B cell (primary cell): ENCODE measurements at regions of chr4 and their contacts with region 1.

Region 1: GRCh38 chr4:185597532-185598188 is 62.4 kb upstream of the PDLIM3 start:
- DNase-seq: peak; percentile 79
- ATAC-seq: peak; percentile 76
- H3K4me3 ChIP-seq: no peak overlapping the region
- H3K4me3 Mint-ChIP-seq: no peak overlapping the region
- H3K27ac ChIP-seq: no peak overlapping the region
- H3K27ac Mint-ChIP-seq: no peak overlapping the region
- H3K4me1 ChIP-seq: no peaks in the 10 kb centered on the region
- H3K4me1 Mint-ChIP-seq: peaks cover 7% of the 10 kb centered on the region
- H3K27me3 ChIP-seq: peaks cover 0 to 3% (median 0%) of the 10 kb centered on the region in 4 experiments
- H3K27me3 Mint-ChIP-seq: peaks cover 33% of the 10 kb centered on the region
- CTCF ChIP-seq: peak; percentile 99

Region 2: DNA sequence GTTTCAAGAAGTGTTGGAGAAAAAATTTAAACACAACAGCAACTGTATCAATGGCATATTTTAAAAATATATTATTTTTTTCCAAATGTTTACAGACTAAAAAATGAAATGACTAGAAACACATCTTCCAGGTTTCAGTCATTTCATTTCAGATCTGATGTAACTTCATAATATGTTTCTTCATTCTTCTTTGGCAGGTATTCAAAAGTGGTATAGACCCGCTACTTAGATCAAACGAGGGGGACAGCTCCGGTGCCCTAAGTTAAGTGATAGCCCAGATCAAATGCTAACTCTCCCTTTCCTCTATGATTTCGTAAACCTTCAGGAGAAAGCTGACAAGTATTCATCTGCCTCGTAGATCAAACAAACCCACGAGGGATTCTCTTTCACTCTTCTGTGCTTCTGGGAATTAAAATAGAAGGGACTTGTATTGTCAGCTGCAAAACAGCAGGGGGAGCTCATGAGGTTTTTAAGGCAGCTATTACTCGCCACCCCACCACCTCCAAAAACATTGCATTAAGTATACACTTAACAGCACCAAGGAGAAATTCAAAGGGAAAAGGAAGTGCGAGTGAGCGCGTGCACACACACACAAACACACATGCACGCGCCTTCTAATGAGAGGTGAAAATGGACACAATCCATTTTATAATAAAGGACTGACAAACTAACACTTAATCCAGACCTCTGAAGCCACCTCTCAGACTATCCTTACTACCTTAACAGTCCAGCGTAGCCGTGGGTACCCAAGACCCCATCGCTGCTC is 558.0 kb before region 1 on chr4:
- CTCF ChIA-PET with region 1: interaction called, 20 read pairs
- POLR2A ChIA-PET with region 1: no interaction called
- intact Hi-C with region 1: loop called (anchors 1 kb)
- DNase-seq: peak; percentile 73
- ATAC-seq: peak; percentile 86
- H3K4me3 ChIP-seq: no peak overlapping the region
- H3K4me3 Mint-ChIP-seq: peak overlapping the region; percentile 16
- H3K27ac ChIP-seq: no peak overlapping the region
- H3K27ac Mint-ChIP-seq: no peak overlapping the region
- H3K4me1 ChIP-seq: peaks cover 0 to 5% of the 10 kb centered on the region in 2 donors
- H3K4me1 Mint-ChIP-seq: peaks cover 5% of the 10 kb centered on the region
- H3K27me3 ChIP-seq: peaks cover 0 to 3% (median 0%) of the 10 kb centered on the region in 4 experiments
- H3K27me3 Mint-ChIP-seq: peaks cover 28% of the 10 kb centered on the region
- CTCF ChIP-seq: peak; percentile 87

Region 3: GRCh38 chr4:185425647-185426352 is 171.9 kb before region 1 on chr4 and contains the start of gene UFSP2:
- CTCF ChIA-PET with region 1: interaction called, 31 read pairs
- POLR2A ChIA-PET with region 1: no interaction called
- intact Hi-C with region 1: loop called (anchors 1 kb)
- DNase-seq: peak; percentile 98
- ATAC-seq: peak; percentile 88
- H3K4me3 ChIP-seq: peak within 1 kb of the TSS; percentile 78 to 99 (median 88)
- H3K4me3 Mint-ChIP-seq: peak within 1 kb of the TSS; percentile 86
- H3K27ac ChIP-seq: peak within 1 kb of the TSS; percentile 98 to 100
- H3K27ac Mint-ChIP-seq: peak within 1 kb of the TSS; percentile 99
- H3K4me1 ChIP-seq: peaks cover 13% of the 10 kb centered on the region in 2 donors
- H3K4me1 Mint-ChIP-seq: peaks cover 15% of the 10 kb centered on the region
- H3K27me3 ChIP-seq: no peaks in the 10 kb centered on the region
- H3K27me3 Mint-ChIP-seq: peaks cover 4% of the 10 kb centered on the region
- CTCF ChIP-seq: no peak
- total RNA-seq, gene UFSP2: 20.6 and 24.4 TPM in 2 replicates

Region 4: GRCh38 chr4:185534866-185535611 is 62.6 kb before region 1 on chr4 and contains the start of gene PDLIM3:
- CTCF ChIA-PET with region 1: interaction called, 4 read pairs
- POLR2A ChIA-PET with region 1: no interaction called
- intact Hi-C with region 1: loop called (anchors 5 kb)
- DNase-seq: peak; percentile 34
- ATAC-seq: peak; percentile 28
- H3K4me3 ChIP-seq: peak within 1 kb of the TSS in 2 of 5 experiments; percentile 18 to 21
- H3K4me3 Mint-ChIP-seq: peak within 1 kb of the TSS; percentile 73
- H3K27ac ChIP-seq: no peak within 1 kb of the TSS
- H3K27ac Mint-ChIP-seq: no peak within 1 kb of the TSS
- H3K4me1 ChIP-seq: peaks cover 5 to 12% of the 10 kb centered on the region in 2 donors
- H3K4me1 Mint-ChIP-seq: peaks cover 8% of the 10 kb centered on the region
- H3K27me3 ChIP-seq: peaks cover 0 to 44% (median 28%) of the 10 kb centered on the region in 4 experiments
- H3K27me3 Mint-ChIP-seq: peaks cover 43% of the 10 kb centered on the region
- CTCF ChIP-seq: no peak
- total RNA-seq, gene PDLIM3: 0.07 and 0.15 TPM in 2 replicates

Region 5: GRCh38 chr4:185608185-185608584 is 10.5 kb after region 1 on chr4:
- CTCF ChIA-PET with region 1: interaction called, 28 read pairs
- POLR2A ChIA-PET with region 1: interaction called, 4 read pairs
- intact Hi-C with region 1: no loop called
- DNase-seq: no peak
- ATAC-seq: no peak
- H3K4me3 ChIP-seq: no peak overlapping the region
- H3K4me3 Mint-ChIP-seq: no peak overlapping the region
- H3K27ac ChIP-seq: no peak overlapping the region
- H3K27ac Mint-ChIP-seq: no peak overlapping the region
- H3K4me1 ChIP-seq: no peaks in the 10 kb centered on the region
- H3K4me1 Mint-ChIP-seq: peaks cover 3% of the 10 kb centered on the region
- H3K27me3 ChIP-seq: peaks cover 0 to 5% (median 0%) of the 10 kb centered on the region in 4 experiments
- H3K27me3 Mint-ChIP-seq: peaks cover 13% of the 10 kb centered on the region
- CTCF ChIP-seq: no peak

Region 6: DNA sequence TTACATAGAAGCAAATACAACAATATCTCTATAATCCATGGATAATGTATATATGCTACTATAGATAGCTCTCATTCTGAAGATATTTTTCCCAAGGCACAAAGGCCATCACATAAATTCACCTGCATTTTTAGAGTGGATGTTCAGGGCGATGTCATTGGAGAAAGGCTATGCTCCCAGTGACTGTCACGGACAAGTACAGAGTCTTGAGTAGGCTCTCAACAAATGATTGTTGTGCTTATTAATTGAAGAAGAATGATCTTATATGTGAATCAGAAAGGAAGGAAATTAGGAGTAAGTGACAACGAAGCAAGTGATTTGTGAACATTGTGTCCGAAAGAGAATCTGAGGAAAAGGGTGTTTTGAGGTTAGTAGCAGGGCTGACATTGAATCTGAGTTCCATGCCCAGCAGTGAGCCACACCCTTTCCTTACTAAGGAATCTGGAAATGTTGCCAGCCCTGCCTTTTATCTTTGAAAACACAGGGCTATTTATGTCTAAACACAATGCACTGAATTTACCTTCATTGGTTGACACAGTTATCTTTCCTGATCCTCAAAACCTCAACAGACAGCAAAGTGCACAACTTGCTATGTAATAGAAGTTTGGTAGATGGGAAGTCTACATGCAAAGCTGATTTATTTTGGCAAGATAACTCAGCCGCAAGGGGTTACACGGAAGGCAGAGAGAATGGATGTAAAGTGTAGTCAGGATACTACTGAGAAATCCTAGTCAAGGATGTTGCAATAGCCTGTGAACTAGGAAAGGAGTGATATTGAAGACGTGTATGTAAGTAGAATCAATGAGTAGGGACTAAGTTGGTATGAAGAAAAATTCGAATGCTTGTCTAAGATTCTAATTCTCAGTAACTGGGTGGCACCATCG is 163.9 kb after region 1 on chr4:
- CTCF ChIA-PET with region 1: no interaction called
- POLR2A ChIA-PET with region 1: no interaction called
- intact Hi-C with region 1: no loop called
- DNase-seq: no peak
- ATAC-seq: no peak
- H3K4me3 ChIP-seq: no peak overlapping the region
- H3K4me3 Mint-ChIP-seq: no peak overlapping the region
- H3K27ac ChIP-seq: no peak overlapping the region
- H3K27ac Mint-ChIP-seq: no peak overlapping the region
- H3K4me1 ChIP-seq: no peaks in the 10 kb centered on the region
- H3K4me1 Mint-ChIP-seq: no peaks in the 10 kb centered on the region
- H3K27me3 ChIP-seq: peaks cover 0 to 6% (median 0%) of the 10 kb centered on the region in 4 experiments
- H3K27me3 Mint-ChIP-seq: peaks cover 18% of the 10 kb centered on the region
- CTCF ChIP-seq: no peak